Naive thymus-derived CD4-positive, alpha-beta T cell (primary cell): ENCODE measurements at regions of chr7 and their contacts with region 1.

Region 1: GRCh38 chr7:105531792-105532671 is at the start of gene RINT1:
- DNase-seq: peak; percentile 72 to 90 (median 81)
- ATAC-seq: peak; percentile 97
- H3K4me3 ChIP-seq: peak within 1 kb of the TSS; percentile 86
- H3K4me3 Mint-ChIP-seq: peak within 1 kb of the TSS; percentile 87 to 99 (median 93)
- H3K27ac ChIP-seq: peak within 1 kb of the TSS; percentile 83
- H3K27ac Mint-ChIP-seq: peak within 1 kb of the TSS; percentile 87 to 98 (median 92)
- H3K4me1 ChIP-seq: peaks cover 13 to 18% of the 10 kb centered on the region in 2 donors
- H3K4me1 Mint-ChIP-seq: peaks cover 21 to 59% (median 38%) of the 10 kb centered on the region in 7 donors
- H3K27me3 ChIP-seq: no peaks in the 10 kb centered on the region
- H3K27me3 Mint-ChIP-seq: no peaks in the 10 kb centered on the region
- total RNA-seq, gene RINT1: 23.0 to 31.8 (median 26.0) TPM

Region 2: DNA sequence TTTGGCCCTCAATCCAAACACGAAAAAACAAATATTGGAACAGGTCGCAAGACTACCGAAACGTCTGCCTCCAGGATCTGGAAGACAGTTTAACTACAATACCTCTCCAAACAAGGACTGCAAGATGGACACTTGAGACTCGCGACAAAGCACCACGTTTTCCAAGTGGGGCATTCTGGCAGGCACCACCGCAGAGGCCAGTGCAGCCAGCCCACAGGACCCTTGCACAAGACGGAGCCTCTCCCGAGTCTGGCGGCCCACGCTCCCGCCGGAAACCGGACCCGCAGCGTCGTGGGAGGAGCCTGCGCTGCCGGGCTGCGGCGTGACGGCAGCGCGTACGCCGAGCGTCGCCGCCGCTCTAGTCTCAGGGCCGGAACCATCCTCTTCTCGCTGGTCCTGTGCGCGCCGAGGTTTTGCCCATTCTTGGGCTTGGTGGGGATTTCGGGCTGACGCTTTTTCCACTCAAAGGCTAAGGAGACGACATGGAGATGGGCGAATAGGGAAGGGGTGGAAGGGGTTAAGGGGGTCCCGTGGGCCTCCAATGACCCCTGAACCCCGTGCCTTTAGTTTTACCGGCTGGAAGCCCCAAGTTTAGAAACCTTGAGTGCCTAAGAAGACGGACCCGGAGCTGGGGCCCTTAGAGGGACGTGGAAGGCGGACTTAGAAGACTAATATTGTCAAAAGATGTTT is 1324.2 kb before region 1 on chr7 and contains the start of gene ORC5:
- CTCF ChIA-PET with region 1: no interaction called
- POLR2A ChIA-PET with region 1: no interaction called
- intact Hi-C with region 1: loop called (anchors 1 to 5 kb)
- DNase-seq: peak; percentile 57 to 85 (median 74)
- ATAC-seq: peak; percentile 99
- H3K4me3 ChIP-seq: peak within 1 kb of the TSS; percentile 93
- H3K4me3 Mint-ChIP-seq: peak within 1 kb of the TSS; percentile 91 to 99 (median 95)
- H3K27ac ChIP-seq: peak within 1 kb of the TSS; percentile 88
- H3K27ac Mint-ChIP-seq: peak within 1 kb of the TSS; percentile 88 to 98 (median 93)
- H3K4me1 ChIP-seq: peaks cover 15 to 17% of the 10 kb centered on the region in 2 donors
- H3K4me1 Mint-ChIP-seq: peaks cover 18 to 57% (median 38%) of the 10 kb centered on the region in 7 donors
- H3K27me3 ChIP-seq: no peaks in the 10 kb centered on the region
- H3K27me3 Mint-ChIP-seq: peaks cover 13 to 25% (median 19%) of the 10 kb centered on the region in 5 donors
- total RNA-seq, gene ORC5: 15.9 to 28.0 (median 24.5) TPM

Region 3: GRCh38 chr7:104382616-104383015 is 1149.4 kb before region 1 on chr7:
- CTCF ChIA-PET with region 1: no interaction called
- POLR2A ChIA-PET with region 1: no interaction called
- intact Hi-C with region 1: no loop called
- DNase-seq: no peak
- ATAC-seq: no peak
- H3K4me3 ChIP-seq: no peak overlapping the region
- H3K4me3 Mint-ChIP-seq: no peak overlapping the region
- H3K27ac ChIP-seq: no peak overlapping the region
- H3K27ac Mint-ChIP-seq: no peak overlapping the region
- H3K4me1 ChIP-seq: no peaks in the 10 kb centered on the region
- H3K4me1 Mint-ChIP-seq: no peaks in the 10 kb centered on the region
- H3K27me3 ChIP-seq: no peaks in the 10 kb centered on the region
- H3K27me3 Mint-ChIP-seq: peaks cover 0 to 27% (median 10%) of the 10 kb centered on the region in 5 donors

Region 4: DNA sequence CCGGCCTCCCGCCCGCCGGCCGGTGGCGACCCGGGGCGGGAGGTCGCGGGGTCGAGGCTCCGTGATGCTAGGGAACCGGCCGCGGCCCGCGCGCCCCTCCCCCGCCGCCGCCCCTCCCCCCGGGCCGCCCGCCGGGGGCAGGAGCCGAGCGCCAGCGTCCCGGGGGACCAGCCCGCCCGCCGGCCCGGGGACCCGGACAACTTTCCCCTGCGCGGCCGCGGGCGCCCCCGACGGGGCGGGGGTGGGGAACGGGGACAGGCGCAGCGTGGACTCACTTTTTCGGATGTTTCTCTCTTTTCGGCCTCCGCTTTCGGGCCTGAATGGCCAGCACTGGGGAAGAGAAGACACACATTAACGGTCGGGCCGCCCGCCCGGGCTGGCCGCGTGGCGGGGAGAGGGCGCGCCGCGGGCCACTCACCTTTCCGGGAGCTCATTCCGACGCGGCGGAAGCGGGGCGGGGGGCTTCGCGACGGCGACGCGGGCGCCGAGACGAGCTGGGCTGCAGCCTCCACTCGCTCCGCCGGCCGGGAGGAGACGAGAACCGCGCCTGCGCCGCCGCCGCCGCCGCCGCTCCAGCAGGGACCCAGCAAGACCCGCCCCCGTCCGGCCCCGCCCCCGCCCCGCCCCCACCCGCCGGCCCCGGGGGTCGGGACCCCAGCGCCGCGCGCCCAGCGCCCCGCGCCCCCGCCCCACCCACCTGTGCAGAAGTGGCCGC is 143.5 kb before region 1 on chr7 and contains the start of gene SRPK2:
- CTCF ChIA-PET with region 1: no interaction called
- POLR2A ChIA-PET with region 1: interaction called, 3 read pairs
- intact Hi-C with region 1: loop called (anchors 2 to 5 kb)
- DNase-seq: peak; percentile 61 to 79 (median 73)
- ATAC-seq: peak; percentile 86
- H3K4me3 ChIP-seq: peak within 1 kb of the TSS; percentile 77
- H3K4me3 Mint-ChIP-seq: peak within 1 kb of the TSS; percentile 91 to 100 (median 98)
- H3K27ac ChIP-seq: peak within 1 kb of the TSS; percentile 82
- H3K27ac Mint-ChIP-seq: peak within 1 kb of the TSS; percentile 90 to 99 (median 95)
- H3K4me1 ChIP-seq: peaks cover 5 to 12% of the 10 kb centered on the region in 2 donors
- H3K4me1 Mint-ChIP-seq: peaks cover 19 to 46% (median 40%) of the 10 kb centered on the region in 7 donors
- H3K27me3 ChIP-seq: no peaks in the 10 kb centered on the region
- H3K27me3 Mint-ChIP-seq: peaks cover 0 to 2% (median 0%) of the 10 kb centered on the region in 5 donors
- total RNA-seq, gene SRPK2: 45.1 to 56.7 (median 46.8) TPM

Region 5: DNA sequence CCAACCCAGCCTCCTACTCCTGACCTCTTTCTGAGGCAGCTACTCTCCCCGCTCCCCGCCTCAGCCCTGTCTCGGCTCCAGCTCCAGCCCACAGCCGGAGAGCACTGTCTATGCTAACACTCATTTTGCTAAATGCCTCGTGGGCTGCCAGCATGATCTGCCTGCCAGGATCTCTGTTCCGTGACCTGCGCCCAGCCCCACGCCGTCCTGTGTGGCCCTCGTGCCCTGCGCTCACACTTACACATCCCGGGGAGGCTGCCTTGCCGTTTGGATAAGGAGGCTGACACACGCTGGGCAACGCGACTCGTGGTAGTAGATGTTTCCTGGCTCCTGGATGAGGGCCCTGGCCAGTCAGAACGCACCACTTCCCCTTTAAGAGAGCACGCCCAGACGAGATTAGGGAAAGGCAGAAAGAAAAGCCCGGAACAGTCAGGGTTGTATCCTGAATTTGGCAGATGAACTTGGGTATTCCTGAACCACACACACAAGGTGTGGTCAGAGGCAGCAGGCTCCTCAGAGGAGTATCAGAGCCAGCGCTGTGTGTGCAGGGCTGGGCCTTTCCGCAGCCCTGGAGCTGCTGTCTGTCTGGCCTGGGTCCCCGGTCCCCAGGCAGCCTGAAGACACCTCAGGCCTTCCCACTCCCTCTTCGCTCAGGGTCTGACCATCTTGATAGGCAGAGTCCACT is 146.9 kb after region 1 on chr7:
- CTCF ChIA-PET with region 1: no interaction called
- POLR2A ChIA-PET with region 1: no interaction called
- intact Hi-C with region 1: loop called in 1 of 2 experiments (anchors 5 kb)
- DNase-seq: peak in 5 of 9 donors; percentile 11 to 33 (median 26)
- ATAC-seq: peak; percentile 47
- H3K4me3 ChIP-seq: peak overlapping the region; percentile 30
- H3K4me3 Mint-ChIP-seq: peak overlapping the region; percentile 76 to 97 (median 86)
- H3K27ac ChIP-seq: peak overlapping the region; percentile 59
- H3K27ac Mint-ChIP-seq: peak overlapping the region; percentile 87 to 99 (median 95)
- H3K4me1 ChIP-seq: peaks cover 41 to 43% of the 10 kb centered on the region in 2 donors
- H3K4me1 Mint-ChIP-seq: peaks cover 56 to 94% (median 86%) of the 10 kb centered on the region in 7 donors
- H3K27me3 ChIP-seq: no peaks in the 10 kb centered on the region
- H3K27me3 Mint-ChIP-seq: no peaks in the 10 kb centered on the region

Region 6: DNA sequence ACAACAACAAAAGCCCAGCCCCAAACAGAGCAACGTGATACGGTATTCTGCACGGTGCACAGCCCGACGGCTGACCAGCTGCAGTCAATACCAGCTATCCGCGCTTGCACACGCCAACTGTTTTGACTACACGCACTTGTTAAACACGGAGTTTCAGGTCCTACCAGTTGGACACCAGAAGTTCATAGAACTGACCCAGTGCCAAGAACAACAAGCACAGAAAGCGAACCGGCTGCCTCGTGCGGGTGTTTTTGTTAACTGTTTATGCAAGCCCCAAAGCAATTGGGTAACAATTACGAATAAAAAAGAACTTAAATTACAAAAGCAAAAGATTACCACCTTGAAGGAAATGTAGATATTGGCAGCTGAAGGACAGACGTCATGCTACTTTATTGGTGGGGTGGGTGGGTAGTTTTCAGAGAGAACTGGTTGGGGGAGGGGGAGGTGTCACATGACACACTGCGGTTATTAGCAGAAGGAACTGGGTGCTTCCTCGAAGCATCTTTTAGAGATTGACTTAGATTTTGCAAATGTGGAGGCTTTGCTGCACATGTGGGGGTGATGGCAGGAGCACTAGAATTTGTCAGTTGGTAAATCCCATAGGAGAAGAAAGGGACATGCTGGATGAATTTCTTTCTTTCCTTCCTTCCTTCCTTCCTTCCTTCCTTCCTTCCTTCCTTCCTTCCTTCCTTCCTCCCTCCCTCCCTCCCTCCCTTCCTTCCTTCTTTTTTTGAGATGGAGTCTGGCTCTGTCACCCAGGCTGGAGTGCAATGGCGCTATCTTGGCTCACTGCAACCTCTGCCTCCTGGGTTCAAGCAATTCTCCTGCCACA is 159.9 kb after region 1 on chr7:
- CTCF ChIA-PET with region 1: no interaction called
- POLR2A ChIA-PET with region 1: no interaction called
- intact Hi-C with region 1: loop called in 1 of 2 experiments (anchors 2 kb)
- DNase-seq: peak; percentile 22 to 94 (median 90)
- ATAC-seq: peak; percentile 89
- H3K4me3 ChIP-seq: peak overlapping the region; percentile 94
- H3K4me3 Mint-ChIP-seq: peak overlapping the region; percentile 84 to 98 (median 92)
- H3K27ac ChIP-seq: peak overlapping the region; percentile 83
- H3K27ac Mint-ChIP-seq: peak overlapping the region; percentile 95 to 100 (median 99)
- H3K4me1 ChIP-seq: peaks cover 19 to 21% of the 10 kb centered on the region in 2 donors
- H3K4me1 Mint-ChIP-seq: peaks cover 33 to 78% (median 65%) of the 10 kb centered on the region in 7 donors
- H3K27me3 ChIP-seq: no peaks in the 10 kb centered on the region
- H3K27me3 Mint-ChIP-seq: no peaks in the 10 kb centered on the region